MCF 10A (cell line): ENCODE measurements at regions of chr22 and their contacts with region 1.

Region 1: DNA sequence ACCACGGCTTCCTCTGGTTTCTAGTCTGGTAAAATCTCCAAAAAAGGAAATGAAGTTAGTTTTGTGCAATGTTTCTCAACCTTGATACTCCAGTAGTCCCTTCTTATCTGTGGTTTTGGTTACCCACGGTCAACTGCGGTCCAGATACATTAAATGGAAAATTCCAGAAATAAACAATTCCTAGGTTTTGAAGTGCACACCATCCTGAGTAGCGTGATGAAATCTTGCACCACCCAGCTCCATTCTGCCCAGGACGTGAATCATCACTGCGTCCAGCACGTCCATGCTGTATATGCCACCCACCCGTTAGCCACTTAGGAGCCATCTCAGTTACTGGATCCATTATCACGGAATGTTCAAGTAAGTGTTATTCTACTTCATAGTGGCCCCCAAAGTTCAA is 117.0 kb downstream of the FBXO7 start:
- DNase-seq: peak; percentile 50
- H3K4me3 Mint-ChIP-seq: no peak overlapping the region
- H3K27ac Mint-ChIP-seq: no peak overlapping the region
- H3K4me1 Mint-ChIP-seq: peaks cover 6% of the 10 kb centered on the region
- H3K27me3 Mint-ChIP-seq: no peaks in the 10 kb centered on the region
- CTCF ChIP-seq: no peak

Region 2: DNA sequence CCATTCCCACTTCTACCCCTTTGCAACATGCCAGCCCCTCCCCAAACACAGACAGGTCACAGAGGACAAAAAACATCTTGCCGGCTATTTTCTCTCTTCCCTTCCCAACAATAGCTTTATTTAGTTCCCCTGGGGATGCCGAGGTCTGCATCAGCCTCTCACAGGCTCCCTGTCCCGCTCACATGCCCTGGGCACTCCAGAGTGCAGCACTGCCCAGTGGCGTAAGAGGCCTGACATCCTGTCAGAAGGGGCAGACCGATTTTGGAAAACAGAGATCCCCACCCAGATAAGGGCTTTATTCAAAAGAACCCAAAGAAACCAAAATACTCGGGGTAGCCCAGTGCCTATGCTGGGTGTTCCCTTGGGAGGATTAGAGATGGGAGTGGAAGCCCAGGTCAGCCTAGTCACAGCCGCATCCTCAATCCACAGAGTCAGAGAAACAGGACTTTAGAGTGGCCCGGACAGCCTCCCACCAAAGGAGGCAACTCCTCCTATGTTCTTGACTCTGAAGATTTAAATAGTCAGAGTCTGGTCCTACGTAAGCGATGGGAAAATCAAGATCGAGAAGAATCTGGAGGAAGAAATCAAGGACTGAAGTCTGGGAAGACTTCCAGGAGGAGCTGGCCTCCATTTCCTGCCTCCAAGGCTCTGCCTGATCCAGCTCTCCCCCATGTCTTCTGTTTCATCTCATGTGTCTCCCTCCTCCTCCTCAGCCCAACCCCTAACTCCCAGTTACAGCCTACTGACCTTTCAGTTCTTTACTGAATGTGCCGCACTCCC is 12.2 kb after region 1 on chr22:
- CTCF ChIA-PET with region 1: interaction called, 10 read pairs
- POLR2A ChIA-PET with region 1: interaction called, 5 read pairs
- intact Hi-C with region 1: no loop called
- DNase-seq: no peak
- H3K4me3 Mint-ChIP-seq: no peak overlapping the region
- H3K27ac Mint-ChIP-seq: no peak overlapping the region
- H3K4me1 Mint-ChIP-seq: peaks cover 13% of the 10 kb centered on the region
- H3K27me3 Mint-ChIP-seq: no peaks in the 10 kb centered on the region
- CTCF ChIP-seq: no peak

Region 3: DNA sequence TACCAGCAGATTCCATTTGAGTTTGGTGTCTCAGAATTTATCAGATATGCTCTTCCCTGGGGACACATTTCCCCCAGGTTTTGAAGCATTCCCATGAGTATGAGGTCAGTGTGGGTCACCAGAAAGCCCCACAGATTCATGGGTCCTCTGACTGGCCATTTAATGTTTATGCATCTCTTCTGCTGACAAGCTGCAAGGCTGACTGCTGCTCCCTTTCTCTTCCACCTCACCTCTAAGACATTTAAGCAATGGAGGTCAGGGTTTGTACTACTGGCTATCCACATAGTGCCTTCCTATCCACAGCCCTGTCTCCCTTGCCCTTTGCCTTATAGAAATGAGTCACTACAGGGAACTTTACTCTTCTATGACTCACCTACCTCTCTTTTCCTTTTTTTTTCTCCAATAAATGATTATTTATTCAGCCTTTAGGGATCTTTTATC is 103.9 kb after region 1 on chr22:
- CTCF ChIA-PET with region 1: no interaction called
- POLR2A ChIA-PET with region 1: no interaction called
- intact Hi-C with region 1: no loop called
- DNase-seq: peak; percentile 61
- H3K4me3 Mint-ChIP-seq: no peak overlapping the region
- H3K27ac Mint-ChIP-seq: no peak overlapping the region
- H3K4me1 Mint-ChIP-seq: peaks cover 46% of the 10 kb centered on the region
- H3K27me3 Mint-ChIP-seq: no peaks in the 10 kb centered on the region
- CTCF ChIP-seq: no peak